Naive thymus-derived CD4-positive, alpha-beta T cell (primary cell): ENCODE measurements at regions of chr20 and their contacts with region 1.

Region 1: DNA sequence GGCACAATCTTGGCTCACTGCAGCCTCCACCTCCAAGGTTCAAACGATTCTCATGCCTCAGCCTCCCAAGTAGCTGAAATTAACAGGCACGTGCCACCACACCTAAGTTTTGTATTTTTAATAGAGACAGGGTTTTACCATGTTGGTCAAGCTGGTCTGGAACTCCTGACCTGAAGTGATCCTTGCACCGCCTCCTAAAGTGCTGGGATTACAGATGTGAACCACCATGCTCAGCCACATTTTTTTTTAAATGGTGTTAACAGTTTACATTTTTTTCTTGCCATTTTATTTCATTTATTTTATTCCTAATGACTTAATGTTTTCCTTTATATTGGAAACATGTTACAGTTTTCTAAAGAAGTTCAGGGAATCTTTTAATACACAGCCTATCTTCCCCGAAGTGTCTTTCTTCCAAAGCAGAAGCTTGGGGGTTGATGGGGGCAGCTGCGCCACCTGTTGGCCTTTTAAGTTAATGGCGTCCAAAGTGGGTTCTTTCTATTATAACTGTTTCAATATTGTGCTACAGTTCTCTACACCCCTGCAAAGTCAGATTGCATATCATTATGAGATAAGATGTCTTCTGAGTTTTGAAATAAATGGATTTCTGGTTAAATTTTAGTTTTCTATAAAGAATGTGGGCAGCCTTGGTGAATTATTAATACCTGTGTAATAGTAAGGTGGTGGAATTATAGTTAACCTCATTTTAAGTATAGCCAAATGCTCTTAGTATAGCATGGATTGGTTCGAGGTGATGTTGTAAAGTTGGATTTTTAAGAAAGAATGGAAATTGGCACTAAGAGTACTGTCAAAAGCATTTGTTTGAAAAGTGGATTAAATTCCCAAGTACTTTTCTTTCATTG is 42.0 kb upstream of the PLCG1 start:
- DNase-seq: peak; percentile 27 to 63 (median 54)
- ATAC-seq: peak; percentile 85
- H3K4me3 ChIP-seq: no peak overlapping the region
- H3K4me3 Mint-ChIP-seq: no peak overlapping the region
- H3K27ac ChIP-seq: no peak overlapping the region
- H3K27ac Mint-ChIP-seq: peak overlapping the region in 4 of 9 donors; percentile 31 to 77 (median 52)
- H3K4me1 ChIP-seq: no peaks in the 10 kb centered on the region
- H3K4me1 Mint-ChIP-seq: peaks cover 0 to 11% (median 4%) of the 10 kb centered on the region in 7 donors
- H3K27me3 ChIP-seq: no peaks in the 10 kb centered on the region
- H3K27me3 Mint-ChIP-seq: no peaks in the 10 kb centered on the region

Region 2: GRCh38 chr20:40970201-40970600 is 125.1 kb before region 1 on chr20:
- CTCF ChIA-PET with region 1: interaction called, 15 read pairs
- POLR2A ChIA-PET with region 1: no interaction called
- intact Hi-C with region 1: loop called (anchors 1 kb)
- DNase-seq: no peak
- ATAC-seq: no peak
- H3K4me3 ChIP-seq: no peak overlapping the region
- H3K4me3 Mint-ChIP-seq: no peak overlapping the region
- H3K27ac ChIP-seq: no peak overlapping the region
- H3K27ac Mint-ChIP-seq: no peak overlapping the region
- H3K4me1 ChIP-seq: no peaks in the 10 kb centered on the region
- H3K4me1 Mint-ChIP-seq: peaks cover 5 to 12% (median 9%) of the 10 kb centered on the region in 7 donors
- H3K27me3 ChIP-seq: no peaks in the 10 kb centered on the region
- H3K27me3 Mint-ChIP-seq: peaks cover 0 to 49% (median 8%) of the 10 kb centered on the region in 5 donors

Region 3: GRCh38 chr20:41030531-41031244 is 64.7 kb before region 1 on chr20:
- CTCF ChIA-PET with region 1: no interaction called
- POLR2A ChIA-PET with region 1: no interaction called
- intact Hi-C with region 1: no loop called
- DNase-seq: no peak
- ATAC-seq: no peak
- H3K4me3 ChIP-seq: peak overlapping the region; percentile 58
- H3K4me3 Mint-ChIP-seq: peak overlapping the region; percentile 79 to 96 (median 94)
- H3K27ac ChIP-seq: no peak overlapping the region
- H3K27ac Mint-ChIP-seq: peak overlapping the region; percentile 42 to 96 (median 88)
- H3K4me1 ChIP-seq: peaks cover 39 to 44% of the 10 kb centered on the region in 2 donors
- H3K4me1 Mint-ChIP-seq: peaks cover 53 to 74% (median 67%) of the 10 kb centered on the region in 7 donors
- H3K27me3 ChIP-seq: no peaks in the 10 kb centered on the region
- H3K27me3 Mint-ChIP-seq: no peaks in the 10 kb centered on the region